Heart right ventricle (tissue), 16 donors: ENCODE measurements at regions of chr3 and their contacts with region 1.

Region 1: GRCh38 chr3:15120986-15121385 is 22.0 kb upstream of the RBSN start:
- DNase-seq: no peak
- ATAC-seq: no peak
- H3K4me3 ChIP-seq: no peak overlapping the region
- H3K27ac ChIP-seq: no peak overlapping the region
- H3K4me1 ChIP-seq: peaks cover 0 to 6% (median 0%) of the 10 kb centered on the region in 9 donors
- H3K27me3 ChIP-seq: peaks cover 0 to 15% (median 11%) of the 10 kb centered on the region in 7 donors
- CTCF ChIP-seq: no peak

Region 2: DNA sequence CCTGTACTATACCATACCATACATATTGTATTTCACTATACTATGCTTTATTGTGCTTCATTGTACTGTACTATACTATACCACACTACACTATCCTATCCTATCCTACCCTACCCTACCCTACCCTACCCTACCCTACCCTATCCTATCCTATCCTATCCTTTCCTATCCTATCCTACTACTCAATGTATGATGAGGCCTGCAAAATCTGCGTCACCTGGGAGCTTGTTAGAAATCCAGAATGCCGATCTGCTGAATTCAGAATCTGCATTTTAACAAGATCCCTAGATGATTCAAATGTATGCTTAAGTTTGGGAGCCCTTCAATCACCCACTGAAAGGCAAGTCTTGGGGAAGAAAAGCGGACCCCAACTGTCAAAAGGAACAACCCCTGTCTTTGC is 39.7 kb after region 1 on chr3:
- intact Hi-C with region 1: no loop called
- DNase-seq: no peak
- ATAC-seq: no peak
- H3K4me3 ChIP-seq: no peak overlapping the region
- H3K27ac ChIP-seq: no peak overlapping the region
- H3K4me1 ChIP-seq: no peaks in the 10 kb centered on the region
- H3K27me3 ChIP-seq: peaks cover 0 to 27% (median 21%) of the 10 kb centered on the region in 7 donors
- CTCF ChIP-seq: no peak

Region 3: GRCh38 chr3:15171096-15171495 is 50.1 kb after region 1 on chr3:
- intact Hi-C with region 1: loop called in 2 of 10 experiments (anchors 10 kb)
- DNase-seq: no peak
- ATAC-seq: no peak
- H3K4me3 ChIP-seq: no peak overlapping the region
- H3K27ac ChIP-seq: no peak overlapping the region
- H3K4me1 ChIP-seq: peaks cover 0 to 5% (median 0%) of the 10 kb centered on the region in 9 donors
- H3K27me3 ChIP-seq: peaks cover 0 to 6% (median 0%) of the 10 kb centered on the region in 7 donors
- CTCF ChIP-seq: no peak